ENCODE measurements at regions of chr19 and their contacts with region 1.

Region 1: GRCh38 chr19:51338563-51339312 is 3.2 kb downstream of the VSIG10L start:
- DNase-seq: peak; percentile 80
- H3K4me3 Mint-ChIP-seq: peak overlapping the region; percentile 93
- H3K27ac Mint-ChIP-seq: peak overlapping the region; percentile 90
- H3K4me1 Mint-ChIP-seq: peaks cover 22% of the 10 kb centered on the region
- H3K27me3 Mint-ChIP-seq: peaks cover 6% of the 10 kb centered on the region

Region 2: GRCh38 chr19:51026554-51026831 is 312.2 kb before region 1 on chr19 and contains the start of gene KLK11:
- intact Hi-C with region 1: no loop called
- DNase-seq: no peak
- H3K4me3 Mint-ChIP-seq: no peak within 1 kb of the TSS
- H3K27ac Mint-ChIP-seq: no peak within 1 kb of the TSS
- H3K4me1 Mint-ChIP-seq: no peaks in the 10 kb centered on the region
- H3K27me3 Mint-ChIP-seq: peaks cover 5% of the 10 kb centered on the region
- total RNA-seq, gene KLK11: not detected in 2 replicates

Region 3: GRCh38 chr19:51327066-51328001 is 11.4 kb before region 1 on chr19:
- intact Hi-C with region 1: loop called (anchors 1 kb)
- DNase-seq: peak; percentile 49
- H3K4me3 Mint-ChIP-seq: peak overlapping the region; percentile 79
- H3K27ac Mint-ChIP-seq: peak overlapping the region; percentile 63
- H3K4me1 Mint-ChIP-seq: peaks cover 12% of the 10 kb centered on the region
- H3K27me3 Mint-ChIP-seq: peaks cover 24% of the 10 kb centered on the region

Region 4: GRCh38 chr19:51393959-51394836 is 55.5 kb after region 1 on chr19:
- intact Hi-C with region 1: loop called (anchors 1 kb)
- DNase-seq: peak; percentile 92
- H3K4me3 Mint-ChIP-seq: peak overlapping the region; percentile 88
- H3K27ac Mint-ChIP-seq: peak overlapping the region; percentile 90
- H3K4me1 Mint-ChIP-seq: peaks cover 55% of the 10 kb centered on the region
- H3K27me3 Mint-ChIP-seq: no peaks in the 10 kb centered on the region

Region 5: DNA sequence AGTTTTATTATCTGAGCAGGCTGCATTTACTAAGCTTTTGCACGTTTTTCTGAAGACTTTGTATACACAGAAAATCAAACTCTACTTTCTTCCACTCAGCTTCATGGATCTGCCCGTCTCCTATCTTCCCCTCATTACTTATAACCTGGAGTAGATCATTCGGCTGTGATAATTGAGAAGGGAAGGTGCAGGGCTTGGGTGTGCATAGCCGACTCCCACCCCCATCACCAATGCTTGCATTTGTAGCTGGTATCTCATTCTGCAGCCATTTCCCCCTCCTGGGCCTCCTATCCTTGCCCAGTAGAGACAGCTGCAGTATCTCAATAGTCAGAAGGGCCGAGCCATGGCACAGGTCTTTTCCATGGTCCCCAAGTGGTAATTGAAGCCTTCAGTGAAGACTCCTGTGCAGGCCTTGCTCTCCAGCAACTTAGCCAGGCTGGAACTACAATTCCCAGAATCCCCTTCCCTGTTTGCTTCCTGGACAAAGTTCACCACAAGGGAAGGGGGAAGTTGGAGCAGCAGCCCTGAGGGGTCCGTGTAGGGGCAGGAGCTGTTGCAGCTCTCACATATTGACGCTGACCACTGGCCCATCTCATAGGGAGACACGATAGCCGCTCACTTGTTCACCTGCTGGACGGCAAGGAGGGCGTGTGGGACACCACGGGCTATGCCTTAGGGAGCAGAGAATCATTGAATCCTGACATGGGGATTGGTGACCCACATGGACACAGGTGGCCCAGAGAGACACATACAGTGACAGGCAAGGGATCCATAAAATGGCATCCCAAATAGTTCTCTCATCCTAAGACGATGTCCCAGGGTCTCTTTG is 121.6 kb after region 1 on chr19:
- intact Hi-C with region 1: no loop called
- DNase-seq: no peak
- H3K4me3 Mint-ChIP-seq: no peak overlapping the region
- H3K27ac Mint-ChIP-seq: no peak overlapping the region
- H3K4me1 Mint-ChIP-seq: peaks cover 6% of the 10 kb centered on the region
- H3K27me3 Mint-ChIP-seq: peaks cover 21% of the 10 kb centered on the region

Region 6: DNA sequence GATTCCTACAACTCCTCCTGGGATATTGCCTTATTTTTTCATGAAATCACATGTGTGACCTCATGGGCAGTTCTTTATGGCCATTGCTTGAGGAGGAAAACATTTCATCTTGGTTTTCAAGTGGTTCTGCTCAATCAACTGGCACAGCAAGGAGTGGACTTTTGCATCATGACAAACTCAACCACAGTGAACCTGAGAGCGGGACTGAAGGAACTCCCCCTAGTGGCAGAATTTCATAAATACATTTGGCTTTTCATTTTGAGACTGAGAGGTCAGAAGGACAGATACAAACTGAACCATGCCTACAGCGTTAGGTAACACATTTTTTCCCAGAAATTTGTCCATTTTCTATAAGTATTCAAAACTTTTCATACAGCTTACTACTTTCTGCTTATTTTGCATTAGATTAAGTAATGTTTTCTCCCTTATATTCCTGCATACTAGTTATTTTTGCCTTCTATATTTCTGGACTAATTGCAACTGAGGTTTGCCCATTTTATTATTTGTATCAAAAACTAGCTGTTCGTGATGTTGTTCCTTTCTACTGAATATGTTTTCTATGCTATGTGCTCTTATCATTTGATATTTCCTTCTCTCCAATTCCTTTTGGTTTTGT is 176.2 kb after region 1 on chr19:
- intact Hi-C with region 1: loop called (anchors 1 kb)
- DNase-seq: peak; percentile 15
- H3K4me3 Mint-ChIP-seq: no peak overlapping the region
- H3K27ac Mint-ChIP-seq: no peak overlapping the region
- H3K4me1 Mint-ChIP-seq: peaks cover 17% of the 10 kb centered on the region
- H3K27me3 Mint-ChIP-seq: peaks cover 26% of the 10 kb centered on the region

Region 7: DNA sequence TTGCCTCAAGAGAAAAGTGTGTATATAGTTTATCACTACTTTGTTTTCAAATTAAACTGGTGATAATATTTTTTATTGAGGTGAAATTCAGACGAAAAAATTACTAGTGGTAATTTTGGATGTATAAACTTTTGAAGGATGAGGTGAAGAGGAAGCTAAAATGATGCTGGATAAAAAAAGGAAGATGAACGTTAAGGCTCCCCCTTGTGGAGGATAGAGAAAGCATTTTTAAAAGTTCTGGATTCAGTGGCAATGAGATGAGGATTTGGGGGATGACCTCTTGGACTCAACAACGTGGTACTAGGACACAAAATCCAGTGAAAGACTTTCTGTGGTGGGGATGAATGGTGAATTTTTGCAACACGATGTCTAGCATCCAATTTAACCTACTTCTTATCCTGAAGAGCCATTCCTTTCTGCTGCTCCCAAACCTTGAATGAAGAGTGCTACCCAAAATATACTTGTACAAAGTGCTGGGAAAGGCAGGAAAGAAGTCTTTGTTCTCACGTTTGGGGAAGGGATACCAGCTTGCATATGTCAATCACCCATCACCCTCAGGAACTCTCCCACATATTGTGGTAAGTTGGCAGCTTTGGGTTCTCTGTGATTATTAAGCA is 298.7 kb after region 1 on chr19:
- intact Hi-C with region 1: loop called (anchors 2 kb)
- DNase-seq: no peak
- H3K4me3 Mint-ChIP-seq: no peak overlapping the region
- H3K27ac Mint-ChIP-seq: no peak overlapping the region
- H3K4me1 Mint-ChIP-seq: no peaks in the 10 kb centered on the region
- H3K27me3 Mint-ChIP-seq: peaks cover 19% of the 10 kb centered on the region

Region 8: DNA sequence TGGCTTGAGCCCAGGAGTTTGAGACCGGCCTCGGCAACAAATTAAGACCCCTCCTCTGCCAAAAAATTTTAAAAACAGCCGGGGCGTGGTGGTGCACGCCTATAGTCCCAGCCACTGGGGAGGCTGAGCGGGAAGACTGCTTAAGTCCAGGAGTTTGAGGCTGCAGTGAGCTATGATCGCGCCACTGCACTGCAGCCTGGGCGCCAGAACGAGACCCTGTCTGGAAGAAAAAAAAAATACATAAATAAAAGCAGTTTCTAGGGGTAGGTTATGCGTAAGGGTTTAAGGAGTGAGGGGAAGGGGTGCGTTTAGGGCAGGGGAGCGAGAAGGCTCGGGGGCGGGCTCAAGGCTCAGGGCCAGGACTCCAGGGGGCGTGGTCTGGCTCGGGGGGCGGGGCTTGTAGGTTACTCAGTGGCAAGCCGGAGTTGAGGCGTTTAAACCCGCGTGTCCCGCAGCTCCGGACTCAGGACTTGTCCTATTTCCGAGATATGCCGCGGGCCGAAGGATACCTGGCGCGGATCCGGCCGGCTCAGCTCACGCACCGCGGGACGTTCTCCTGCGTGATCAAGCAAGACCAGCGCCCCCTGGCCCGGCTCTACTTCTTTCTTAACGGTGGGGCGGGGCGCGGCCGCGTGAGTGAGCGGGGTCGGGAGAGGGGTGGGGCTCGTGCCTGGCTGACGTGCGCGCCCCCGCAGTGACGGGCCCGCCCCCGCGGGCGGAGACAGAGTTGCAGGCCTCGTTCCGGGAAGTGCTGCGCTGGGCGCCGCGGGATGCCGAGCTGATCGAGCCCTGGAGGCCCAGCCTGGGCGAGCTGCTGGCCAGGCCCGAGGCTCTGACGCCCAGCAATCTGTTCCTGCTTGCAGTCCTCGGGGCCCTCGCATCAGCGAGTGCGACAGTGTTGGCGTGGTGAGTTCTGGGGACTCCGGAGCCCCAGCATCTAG is 365.1 kb after region 1 on chr19:
- intact Hi-C with region 1: loop called (anchors 2 kb)
- DNase-seq: peak; percentile 95
- H3K4me3 Mint-ChIP-seq: peak overlapping the region; percentile 87
- H3K27ac Mint-ChIP-seq: peak overlapping the region; percentile 89
- H3K4me1 Mint-ChIP-seq: peaks cover 30% of the 10 kb centered on the region
- H3K27me3 Mint-ChIP-seq: peaks cover 3% of the 10 kb centered on the region